Activated CD8-positive, alpha-beta memory T cell treated with anti-CD3 and anti-CD28 coated beads, Interleukin-2, amount 10 ng/mL, durations not matched to agents 7 days and 5 days (primary cell): ENCODE measurements at regions of chr10 and their contacts with region 1.

Region 1: GRCh38 chr10:11165591-11166543 is 148.2 kb downstream of the CELF2 start:
- DNase-seq: peak; percentile 91
- ATAC-seq: peak; percentile 60
- H3K4me3 Mint-ChIP-seq: no peak overlapping the region
- H3K27ac Mint-ChIP-seq: peak overlapping the region; percentile 97
- H3K4me1 Mint-ChIP-seq: peaks cover 33% of the 10 kb centered on the region
- H3K27me3 Mint-ChIP-seq: no peaks in the 10 kb centered on the region

Region 2: GRCh38 chr10:10967029-10967428 is 198.8 kb before region 1 on chr10:
- CTCF ChIA-PET with region 1: no interaction called
- DNase-seq: no peak
- ATAC-seq: no peak
- H3K4me3 Mint-ChIP-seq: no peak overlapping the region
- H3K27ac Mint-ChIP-seq: no peak overlapping the region
- H3K4me1 Mint-ChIP-seq: no peaks in the 10 kb centered on the region
- H3K27me3 Mint-ChIP-seq: peaks cover 26% of the 10 kb centered on the region

Region 3: DNA sequence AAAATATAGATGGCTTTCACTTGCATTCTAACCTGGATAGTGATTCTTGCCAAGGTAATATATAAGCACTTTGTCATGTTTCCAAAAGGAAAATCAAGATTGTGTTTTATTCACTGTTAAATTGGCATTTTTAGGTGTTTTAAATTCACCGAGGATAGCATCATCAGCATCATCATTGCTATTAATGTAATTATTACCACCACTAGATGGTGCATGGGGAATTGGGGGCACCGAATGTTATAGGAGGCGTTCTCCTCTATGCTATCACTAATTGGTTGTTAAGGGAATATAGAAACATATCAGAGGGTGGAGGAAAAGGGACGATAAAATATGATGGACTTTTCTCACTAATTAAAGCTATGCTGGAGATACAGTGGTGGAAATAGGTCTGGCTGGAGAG is 52.7 kb before region 1 on chr10:
- CTCF ChIA-PET with region 1: interaction called, 38 read pairs
- DNase-seq: no peak
- ATAC-seq: peak; percentile 95
- H3K4me3 Mint-ChIP-seq: no peak overlapping the region
- H3K27ac Mint-ChIP-seq: no peak overlapping the region
- H3K4me1 Mint-ChIP-seq: peaks cover 4% of the 10 kb centered on the region
- H3K27me3 Mint-ChIP-seq: peaks cover 5% of the 10 kb centered on the region

Region 4: GRCh38 chr10:11145495-11145855 is 20.4 kb before region 1 on chr10:
- CTCF ChIA-PET with region 1: interaction called, 189 read pairs
- DNase-seq: peak; percentile 89
- ATAC-seq: peak; percentile 74
- H3K4me3 Mint-ChIP-seq: peak overlapping the region; percentile 54
- H3K27ac Mint-ChIP-seq: peak overlapping the region; percentile 97
- H3K4me1 Mint-ChIP-seq: peaks cover 92% of the 10 kb centered on the region
- H3K27me3 Mint-ChIP-seq: no peaks in the 10 kb centered on the region

Region 5: DNA sequence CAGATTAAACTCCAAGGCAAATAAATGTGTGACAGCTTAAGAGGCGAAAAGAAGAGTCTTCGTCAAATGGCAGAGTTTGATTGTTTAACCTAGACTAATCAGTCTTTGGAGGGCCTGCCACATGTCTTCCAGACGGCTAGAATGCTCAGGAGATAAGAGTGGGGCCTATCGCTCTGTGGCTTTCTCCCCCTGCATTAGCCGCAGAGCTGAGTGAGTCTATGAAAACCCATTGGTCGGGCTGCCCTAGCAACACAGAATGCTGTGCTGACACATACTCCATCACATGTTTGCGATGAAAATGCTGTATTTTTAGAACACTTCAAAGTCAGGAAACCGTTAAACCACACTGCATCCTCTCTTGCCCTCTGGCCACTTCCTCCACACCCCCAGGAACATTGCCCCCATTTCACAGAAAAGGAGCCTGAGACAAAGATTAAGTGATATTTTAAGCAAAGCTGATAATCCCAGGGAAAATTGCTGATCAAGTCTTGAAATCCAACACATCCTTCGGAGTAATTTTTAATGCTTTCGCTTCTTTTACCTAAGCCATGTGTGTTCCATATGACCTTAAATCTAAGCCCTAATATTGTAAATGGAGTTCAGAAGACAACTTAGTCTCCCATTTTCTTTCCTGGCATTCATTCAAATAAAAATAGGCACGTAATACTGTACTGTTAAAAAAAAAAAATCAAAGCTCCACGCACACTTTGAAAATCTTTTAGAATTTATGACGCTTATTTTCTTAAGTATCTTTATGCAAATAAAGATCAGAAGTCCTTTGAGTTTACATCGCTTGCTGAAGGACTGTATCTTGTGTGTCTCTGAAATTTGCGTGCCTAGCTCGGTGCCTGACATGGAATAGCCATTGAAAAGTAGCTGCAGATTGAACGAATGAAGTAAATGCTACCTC is 13.0 kb after region 1 on chr10:
- CTCF ChIA-PET with region 1: interaction called, 122 read pairs
- DNase-seq: peak; percentile 97
- ATAC-seq: peak; percentile 74
- H3K4me3 Mint-ChIP-seq: no peak overlapping the region
- H3K27ac Mint-ChIP-seq: no peak overlapping the region
- H3K4me1 Mint-ChIP-seq: peaks cover 91% of the 10 kb centered on the region
- H3K27me3 Mint-ChIP-seq: no peaks in the 10 kb centered on the region

Region 6: DNA sequence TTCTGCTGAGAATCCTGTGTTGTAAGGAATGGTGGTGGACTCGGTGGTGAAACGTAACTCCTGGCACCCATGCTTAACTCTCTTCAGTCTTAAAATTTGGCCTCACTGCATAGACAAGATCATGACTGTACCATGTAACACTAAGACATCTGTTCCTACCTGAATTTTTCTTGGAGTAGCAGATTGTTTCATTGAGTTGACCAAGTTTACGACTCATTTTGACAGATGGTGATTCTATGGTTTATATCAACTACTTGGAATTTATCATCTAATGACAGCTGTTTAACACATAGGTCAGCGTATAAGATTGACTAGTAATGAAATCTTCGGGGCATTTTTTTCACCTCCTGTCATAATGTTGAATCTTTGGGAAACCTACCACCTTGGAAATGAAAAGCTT is 36.0 kb after region 1 on chr10:
- CTCF ChIA-PET with region 1: no interaction called
- DNase-seq: no peak
- ATAC-seq: no peak
- H3K4me3 Mint-ChIP-seq: no peak overlapping the region
- H3K27ac Mint-ChIP-seq: no peak overlapping the region
- H3K4me1 Mint-ChIP-seq: peaks cover 96% of the 10 kb centered on the region
- H3K27me3 Mint-ChIP-seq: no peaks in the 10 kb centered on the region